ENCODE measurements at regions of chr1 and their contacts with region 1.

Region 1: GRCh38 chr1:200488375-200489165 is 78.7 kb upstream of the ZNF281 start:
- DNase-seq: no peak
- H3K4me3 ChIP-seq: peak overlapping the region in 3 of 4 donors; percentile 7 to 10 (median 7)
- H3K27ac ChIP-seq: peak overlapping the region in 1 of 4 donors; percentile 59
- H3K4me1 ChIP-seq: peaks cover 0 to 11% (median 1%) of the 10 kb centered on the region in 4 donors
- H3K27me3 ChIP-seq: no peaks in the 10 kb centered on the region
- CTCF ChIP-seq: peak; percentile 66 to 83 (median 82)
- EP300 ChIP-seq: no peak
- POLR2A ChIP-seq: no peak

Region 2: GRCh38 chr1:200139661-200140250 is 348.8 kb before region 1 on chr1:
- intact Hi-C with region 1: loop called (anchors 5 kb)
- DNase-seq: no peak
- H3K4me3 ChIP-seq: no peak overlapping the region
- H3K27ac ChIP-seq: no peak overlapping the region
- H3K4me1 ChIP-seq: no peaks in the 10 kb centered on the region
- H3K27me3 ChIP-seq: no peaks in the 10 kb centered on the region
- CTCF ChIP-seq: peak in 3 of 4 experiments; percentile 11 to 31 (median 14)
- EP300 ChIP-seq: no peak
- POLR2A ChIP-seq: no peak

Region 3: DNA sequence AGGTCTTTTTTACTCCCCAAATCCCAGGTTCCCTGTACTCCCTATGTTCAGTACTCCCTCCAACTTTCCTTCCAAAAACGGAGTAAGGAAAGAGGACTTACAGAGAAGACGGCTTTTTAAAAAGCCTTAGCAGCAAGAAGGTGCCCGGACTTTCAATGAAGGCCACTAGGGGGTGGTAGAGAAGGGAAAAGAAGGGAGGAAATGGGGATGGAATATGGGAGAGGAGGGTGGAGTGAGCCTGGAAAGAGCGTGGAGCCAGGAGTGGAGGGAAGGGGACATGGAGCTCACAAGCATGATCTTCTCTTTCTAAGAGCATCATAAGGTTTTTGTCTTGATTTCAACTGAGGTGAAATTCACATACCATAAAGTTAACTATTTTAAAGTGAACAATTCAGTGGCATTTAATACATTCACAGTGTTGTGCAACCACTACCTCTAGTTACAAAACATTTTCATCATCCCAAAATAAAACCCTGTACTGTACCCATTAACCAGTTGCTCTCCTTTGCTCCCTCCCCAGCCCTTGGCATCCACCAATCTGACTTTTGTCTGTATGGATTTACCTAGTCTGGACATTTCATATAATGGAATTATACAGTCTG is 208.7 kb before region 1 on chr1:
- intact Hi-C with region 1: loop called (anchors 1 kb)
- DNase-seq: no peak
- H3K4me3 ChIP-seq: no peak overlapping the region
- H3K27ac ChIP-seq: no peak overlapping the region
- H3K4me1 ChIP-seq: no peaks in the 10 kb centered on the region
- H3K27me3 ChIP-seq: no peaks in the 10 kb centered on the region
- CTCF ChIP-seq: peak in 3 of 4 experiments; percentile 60 to 69 (median 62)
- EP300 ChIP-seq: no peak
- POLR2A ChIP-seq: no peak